Activated naive CD4-positive, alpha-beta T cell treated with anti-CD3 and anti-CD28 coated beads for 36 hours (primary cell): ENCODE measurements at regions of chr5 and their contacts with region 1.

Region 1: DNA sequence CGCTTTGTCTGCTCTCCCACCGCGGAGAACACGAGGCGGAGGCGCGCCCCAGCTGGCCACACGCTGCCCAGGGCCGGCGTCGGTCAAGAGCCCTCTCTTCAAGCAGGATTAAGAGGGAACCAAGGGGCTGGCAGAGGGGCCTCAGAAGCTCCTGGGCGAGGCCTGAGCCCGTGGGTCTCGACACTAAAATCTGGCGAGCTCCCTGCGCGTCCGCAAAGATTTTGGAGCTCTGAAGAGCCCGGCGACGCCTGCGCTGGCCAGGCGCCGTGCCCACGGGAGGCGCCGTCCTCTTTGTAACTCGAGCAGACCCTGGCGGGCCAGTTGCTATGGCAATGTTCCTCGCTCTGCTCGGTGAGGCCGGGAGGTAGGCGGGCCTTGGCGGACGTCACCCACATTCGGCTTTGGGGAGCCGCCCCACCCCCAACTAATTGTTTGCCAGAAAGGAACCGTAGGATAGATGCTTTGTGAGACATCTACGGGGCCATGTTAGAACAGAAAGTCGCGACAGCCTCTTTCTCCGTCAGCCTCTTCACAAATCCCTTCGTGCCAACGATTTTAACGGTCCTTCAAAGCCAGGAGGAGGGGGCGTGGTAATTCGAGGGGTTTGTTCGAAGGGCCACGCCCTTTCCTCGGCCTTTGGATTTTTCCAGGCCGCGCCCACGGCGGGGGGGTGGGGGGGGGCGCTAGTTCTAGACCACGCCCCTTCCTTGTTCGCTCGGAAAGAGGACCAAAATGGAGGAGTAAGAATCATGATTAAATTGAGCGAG is 714 bp upstream of the CNOT8 start:
- DNase-seq: peak; percentile 86
- H3K4me3 Mint-ChIP-seq: peak overlapping the region; percentile 88
- H3K27ac Mint-ChIP-seq: peak overlapping the region; percentile 94
- H3K4me1 Mint-ChIP-seq: peaks cover 35% of the 10 kb centered on the region
- H3K27me3 Mint-ChIP-seq: no peaks in the 10 kb centered on the region

Region 2: DNA sequence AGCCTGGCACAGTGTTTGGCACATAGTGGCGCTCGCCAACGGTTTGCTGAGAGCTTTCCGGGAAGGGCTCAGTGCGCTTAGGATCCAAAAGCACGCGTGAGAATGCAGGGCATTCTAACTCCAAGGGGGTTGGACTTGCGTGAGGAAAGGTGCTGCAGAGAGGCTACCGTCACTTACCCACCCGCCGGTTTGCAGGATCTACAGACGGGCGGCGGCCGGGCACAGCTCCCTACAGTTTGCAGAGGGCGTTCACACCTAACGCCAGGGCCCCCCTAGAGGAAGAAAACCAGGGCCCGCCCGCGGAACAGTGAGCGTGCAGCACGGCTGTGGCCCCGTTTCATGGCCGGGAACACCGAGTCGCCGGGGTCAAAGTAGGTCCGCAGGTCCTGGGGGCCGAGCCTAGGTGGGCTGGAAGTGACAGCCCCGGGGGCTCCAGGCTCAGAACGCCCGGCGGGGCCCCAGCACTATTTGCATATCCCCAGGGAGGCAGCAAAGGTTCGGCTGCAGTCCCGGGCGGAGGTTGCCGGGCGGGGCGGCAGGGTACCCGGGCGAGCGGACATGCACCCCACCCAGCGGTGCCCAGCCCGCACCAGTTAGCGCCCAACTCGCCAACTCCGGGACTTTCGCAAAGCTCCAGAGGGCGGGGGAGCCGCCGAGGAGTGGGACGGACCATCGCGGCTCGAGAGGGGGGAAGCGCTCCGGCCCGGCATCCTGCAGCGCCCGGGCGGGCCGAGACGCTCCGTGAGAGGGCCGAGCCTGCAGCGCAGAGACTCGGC is 667.7 kb before region 1 on chr5:
- CTCF ChIA-PET with region 1: no interaction called
- intact Hi-C with region 1: loop called (anchors 5 kb)
- DNase-seq: peak; percentile 82
- H3K4me3 Mint-ChIP-seq: peak overlapping the region; percentile 81
- H3K27ac Mint-ChIP-seq: no peak overlapping the region
- H3K4me1 Mint-ChIP-seq: peaks cover 32% of the 10 kb centered on the region
- H3K27me3 Mint-ChIP-seq: peaks cover 7% of the 10 kb centered on the region

Region 3: DNA sequence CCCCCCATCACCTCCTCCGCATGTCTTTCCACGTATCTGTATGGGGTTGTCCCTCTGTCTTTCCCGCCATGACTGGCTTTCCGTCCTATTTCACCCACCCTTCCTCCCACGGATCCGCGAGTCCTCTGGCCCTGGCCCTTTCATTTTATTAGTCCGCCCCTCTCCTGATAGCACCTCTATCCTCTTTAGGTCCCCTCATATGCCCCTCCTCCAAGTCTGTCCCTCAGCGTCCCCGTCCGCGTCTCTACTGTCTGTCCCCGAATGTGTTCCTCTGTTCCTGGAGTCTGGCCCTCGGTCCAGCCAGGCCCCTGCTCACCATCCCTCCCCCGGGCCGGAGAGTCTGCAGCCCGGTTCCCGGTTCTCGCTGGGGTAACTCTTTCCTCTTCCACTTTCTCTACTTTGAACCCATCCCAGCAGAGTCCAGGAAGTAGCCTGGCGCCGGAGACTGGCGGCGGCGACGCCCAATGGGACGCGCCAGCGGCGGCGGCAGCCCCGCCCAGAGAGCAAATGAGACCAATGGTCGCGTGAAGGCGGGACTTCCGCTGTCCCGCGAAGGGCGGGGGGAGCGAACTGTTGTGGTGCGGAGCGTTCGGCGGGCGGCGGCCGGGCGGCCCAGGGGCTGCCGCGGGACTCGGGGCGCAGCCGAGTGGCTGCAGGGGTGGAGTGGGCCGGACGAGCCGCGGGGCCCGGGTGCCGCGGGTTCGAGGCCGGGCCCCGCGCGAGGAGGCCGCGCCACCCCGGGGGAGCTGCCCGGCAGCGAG is 412.1 kb before region 1 on chr5 and contains the start of gene SAP30L:
- CTCF ChIA-PET with region 1: no interaction called
- intact Hi-C with region 1: loop called (anchors 1 kb)
- DNase-seq: peak; percentile 94
- H3K4me3 Mint-ChIP-seq: peak within 1 kb of the TSS; percentile 98
- H3K27ac Mint-ChIP-seq: peak within 1 kb of the TSS; percentile 92
- H3K4me1 Mint-ChIP-seq: peaks cover 42% of the 10 kb centered on the region
- H3K27me3 Mint-ChIP-seq: no peaks in the 10 kb centered on the region
- total RNA-seq, gene SAP30L: 29.3 to 30.3 TPM

Region 4: DNA sequence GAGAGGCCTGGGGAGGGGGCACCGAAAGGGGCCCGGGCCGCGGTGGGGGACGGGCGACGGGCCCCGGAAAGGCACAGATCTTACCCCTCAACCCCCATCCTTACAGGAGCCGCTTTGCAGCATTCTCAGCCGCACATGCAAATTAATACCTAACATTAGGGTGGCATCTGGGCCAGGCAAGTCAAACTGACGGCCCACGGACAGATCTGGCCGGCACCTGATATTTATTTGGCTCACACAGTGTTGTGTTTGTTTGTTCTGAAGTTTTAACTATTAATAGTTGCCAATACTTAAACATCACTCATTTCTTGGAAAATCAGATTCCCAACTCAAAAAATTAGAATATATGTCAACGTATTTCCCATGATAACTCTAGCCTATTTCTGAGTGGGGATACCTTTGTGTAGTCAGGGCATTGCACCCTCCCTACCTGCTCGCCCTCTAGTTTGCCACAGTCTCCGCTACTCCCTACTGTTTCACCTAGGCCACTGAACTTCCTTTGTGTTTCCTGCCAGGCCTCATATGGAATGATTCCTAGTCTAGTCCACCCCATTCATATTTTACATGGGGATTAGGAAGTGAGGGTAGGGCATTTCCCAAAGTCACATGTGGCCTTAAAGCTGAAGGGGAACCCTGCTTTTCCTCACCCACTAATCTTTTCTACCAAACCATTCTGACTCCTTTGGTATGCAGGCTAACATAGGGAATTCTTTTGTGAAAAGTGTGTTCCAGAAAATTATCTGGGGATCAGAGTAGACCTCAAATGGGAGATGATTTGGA is 174.4 kb before region 1 on chr5:
- CTCF ChIA-PET with region 1: no interaction called
- intact Hi-C with region 1: loop called (anchors 1 kb)
- DNase-seq: no peak
- H3K4me3 Mint-ChIP-seq: peak overlapping the region; percentile 59
- H3K27ac Mint-ChIP-seq: no peak overlapping the region
- H3K4me1 Mint-ChIP-seq: peaks cover 6% of the 10 kb centered on the region
- H3K27me3 Mint-ChIP-seq: peaks cover 2% of the 10 kb centered on the region

Region 5: DNA sequence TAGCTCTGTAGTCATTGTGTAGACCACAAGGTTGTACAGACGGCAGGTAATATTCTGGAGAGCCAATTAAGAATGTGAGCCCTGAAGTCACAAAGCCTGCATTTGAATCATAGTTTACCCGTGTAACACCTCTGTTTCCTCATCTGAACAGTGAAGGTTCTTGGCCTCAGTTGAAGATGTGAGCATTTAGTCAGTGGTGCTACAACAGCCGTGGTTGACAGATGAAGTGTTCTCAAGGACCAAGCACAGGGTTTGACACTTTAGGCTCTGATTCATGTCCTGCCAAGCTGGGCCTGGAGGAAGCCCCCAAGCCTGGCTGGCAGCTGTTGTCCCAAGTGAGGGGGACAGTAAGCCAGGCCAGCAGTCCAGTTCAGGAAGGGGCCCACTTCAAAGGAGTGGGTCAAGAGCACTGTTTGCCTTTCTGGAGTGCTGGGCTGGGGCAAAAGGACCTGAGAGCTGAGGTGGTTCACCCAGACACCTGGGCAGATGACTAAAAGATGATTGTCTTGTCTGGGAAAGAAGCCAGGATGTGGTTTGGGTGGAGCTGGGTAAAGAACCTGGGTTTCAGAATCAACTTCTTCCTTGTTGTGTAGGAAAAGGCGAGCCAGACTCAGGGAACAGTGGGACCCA is 28.0 kb before region 1 on chr5:
- CTCF ChIA-PET with region 1: interaction called, 4 read pairs
- intact Hi-C with region 1: loop called (anchors 1 kb)
- DNase-seq: peak; percentile 71
- H3K4me3 Mint-ChIP-seq: no peak overlapping the region
- H3K27ac Mint-ChIP-seq: peak overlapping the region; percentile 80
- H3K4me1 Mint-ChIP-seq: peaks cover 42% of the 10 kb centered on the region
- H3K27me3 Mint-ChIP-seq: no peaks in the 10 kb centered on the region